H1 (cell line): ENCODE measurements at regions of chr11 and their contacts with region 1.

Region 1: DNA sequence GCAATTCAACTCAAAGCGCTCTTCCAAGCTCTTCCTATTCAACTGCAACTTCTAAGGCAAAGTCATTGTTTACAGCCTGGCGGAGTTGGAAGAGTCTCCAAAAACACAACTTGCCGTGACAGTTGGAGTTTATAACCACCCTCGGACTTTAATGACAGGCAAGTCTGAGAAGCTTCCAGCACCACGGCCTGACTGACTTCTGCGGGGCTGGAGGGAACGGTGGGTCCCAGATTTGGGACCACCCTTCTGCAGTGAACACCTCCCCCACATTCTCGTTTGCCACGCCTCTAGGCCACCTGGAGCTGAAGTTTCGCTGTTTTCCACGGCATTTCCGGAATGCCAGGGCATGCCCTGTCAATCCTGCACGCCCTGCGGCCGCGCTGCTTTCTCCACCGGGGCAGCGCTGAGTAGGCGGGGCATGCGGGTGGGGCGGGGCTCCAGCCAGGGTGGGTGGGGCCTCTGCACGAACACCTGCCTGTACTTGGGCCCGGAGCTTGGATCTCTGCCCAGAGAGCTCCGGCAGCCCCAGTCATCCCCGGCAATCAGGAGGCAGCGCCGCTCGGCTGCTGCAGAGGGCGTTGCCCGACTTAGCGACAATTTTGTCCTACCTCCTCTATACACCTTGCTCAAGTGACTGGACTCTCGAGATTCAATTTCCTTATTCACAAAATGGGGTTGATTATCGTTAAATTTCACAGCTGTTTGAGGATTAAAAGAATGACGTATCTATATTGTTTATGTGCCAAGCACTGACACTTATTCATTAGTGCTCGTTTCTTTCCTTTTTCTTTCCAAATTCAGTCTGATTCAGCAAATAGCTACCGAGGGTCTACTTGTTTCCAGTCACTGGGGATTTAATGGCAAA is 48.7 kb upstream of the BIRC3 start:
- DNase-seq: peak; percentile 88 to 89
- H3K4me3 ChIP-seq: peak overlapping the region; percentile 28 to 65 (median 56); a peak in 7 of 8 replicates
- H3K27ac ChIP-seq: no peak overlapping the region
- H3K4me1 ChIP-seq: peaks cover 3 to 18% (median 8%) of the 10 kb centered on the region in 4 experiments; a peak in 6 of 7 replicates
- H3K27me3 ChIP-seq: no peaks in the 10 kb centered on the region; a peak in 1 of 7 replicates
- CTCF ChIP-seq: peak; percentile 74 to 77 (median 74)
- EP300 ChIP-seq: no peak
- POLR2A ChIP-seq: no peak
- RAD21 ChIP-seq: peak; percentile 75 to 80

Region 2: GRCh38 chr11:102237096-102237735 is 31.3 kb before region 1 on chr11:
- CTCF ChIA-PET with region 1: interaction called, 11 read pairs
- POLR2A ChIA-PET with region 1: no interaction called
- DNase-seq: no peak
- H3K4me3 ChIP-seq: no peak overlapping the region
- H3K27ac ChIP-seq: no peak overlapping the region
- H3K4me1 ChIP-seq: peaks cover 0 to 4% (median 3%) of the 10 kb centered on the region in 4 experiments
- H3K27me3 ChIP-seq: no peaks in the 10 kb centered on the region
- CTCF ChIP-seq: no peak
- EP300 ChIP-seq: no peak
- POLR2A ChIP-seq: no peak
- RAD21 ChIP-seq: no peak

Region 3: DNA sequence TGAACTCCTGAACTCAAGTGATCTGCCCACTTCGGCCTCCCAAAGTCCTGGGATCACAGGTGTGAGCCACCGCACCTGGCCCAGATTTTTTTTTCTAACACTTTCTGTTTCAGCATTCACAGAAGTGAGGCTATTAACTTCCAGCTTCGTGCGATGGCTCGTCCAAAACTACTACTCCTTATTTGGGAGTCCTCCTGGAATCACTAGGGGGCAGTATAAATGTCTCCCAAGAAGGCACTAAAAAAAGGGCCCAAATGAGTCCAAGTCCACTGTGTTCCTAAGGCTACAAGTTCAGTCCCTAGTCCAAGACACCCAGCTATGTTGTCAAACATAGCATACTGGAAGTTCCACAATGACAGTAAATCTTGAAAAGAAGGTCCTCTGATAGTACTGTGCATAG is 14.5 kb before region 1 on chr11:
- CTCF ChIA-PET with region 1: interaction called, 36 read pairs
- POLR2A ChIA-PET with region 1: interaction called, 3 read pairs
- DNase-seq: no peak
- H3K4me3 ChIP-seq: no peak overlapping the region
- H3K27ac ChIP-seq: no peak overlapping the region
- H3K4me1 ChIP-seq: no peaks in the 10 kb centered on the region; a peak in 1 of 7 replicates
- H3K27me3 ChIP-seq: no peaks in the 10 kb centered on the region
- CTCF ChIP-seq: peak in 2 of 3 experiments; percentile 40 to 64; a peak in 2 of 4 replicates
- EP300 ChIP-seq: no peak
- POLR2A ChIP-seq: no peak
- RAD21 ChIP-seq: peak; percentile 44 to 47

Region 4: DNA sequence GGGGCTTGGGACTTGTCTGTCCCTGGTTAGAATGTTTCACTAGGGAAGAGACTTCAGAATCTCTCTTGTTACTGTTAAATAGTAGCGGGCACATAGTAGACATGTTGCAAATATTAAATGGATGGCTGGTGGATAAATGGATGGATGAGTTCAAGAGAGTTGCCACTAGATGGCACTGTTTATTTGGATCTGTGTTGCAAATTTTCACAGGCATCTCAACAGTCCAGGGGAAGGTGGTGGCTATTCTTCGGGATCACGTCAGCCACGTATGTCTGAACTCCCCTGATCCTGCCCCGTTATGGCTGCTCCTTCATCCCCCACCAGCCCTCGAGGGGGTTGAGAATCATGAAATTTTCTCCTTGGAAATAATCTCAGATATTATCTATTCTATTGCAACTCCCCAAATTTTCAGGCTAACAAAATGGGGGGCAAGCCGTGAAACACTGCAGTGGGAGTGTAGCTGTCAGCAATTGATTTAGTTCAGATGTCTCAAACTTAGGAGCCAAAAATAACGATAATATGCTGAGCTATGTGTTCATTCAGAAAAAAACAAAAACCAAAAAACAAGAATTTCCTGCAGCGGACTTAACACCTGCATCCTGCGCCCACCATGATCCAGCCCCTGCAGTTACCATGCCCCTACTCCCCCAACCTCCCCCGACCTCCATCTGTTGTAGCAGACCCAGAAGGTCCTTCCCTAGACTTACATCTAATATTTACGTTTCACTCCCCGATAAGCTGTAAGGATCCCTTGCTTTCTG is 19.6 kb after region 1 on chr11:
- CTCF ChIA-PET with region 1: interaction called, 20 read pairs
- POLR2A ChIA-PET with region 1: no interaction called
- DNase-seq: no peak
- H3K4me3 ChIP-seq: no peak overlapping the region
- H3K27ac ChIP-seq: no peak overlapping the region
- H3K4me1 ChIP-seq: peaks cover 0 to 5% (median 0%) of the 10 kb centered on the region in 4 experiments; a peak in 2 of 7 replicates
- H3K27me3 ChIP-seq: no peaks in the 10 kb centered on the region
- CTCF ChIP-seq: peak in 2 of 3 experiments; percentile 49 to 76; a peak in 3 of 4 replicates
- EP300 ChIP-seq: no peak
- POLR2A ChIP-seq: no peak
- RAD21 ChIP-seq: peak; percentile 75 to 79

Region 5: GRCh38 chr11:102323542-102324251 is 55.1 kb after region 1 on chr11:
- CTCF ChIA-PET with region 1: no interaction called
- POLR2A ChIA-PET with region 1: no interaction called
- DNase-seq: no peak
- H3K4me3 ChIP-seq: no peak overlapping the region
- H3K27ac ChIP-seq: no peak overlapping the region
- H3K4me1 ChIP-seq: no peaks in the 10 kb centered on the region
- H3K27me3 ChIP-seq: no peaks in the 10 kb centered on the region
- CTCF ChIP-seq: no peak
- EP300 ChIP-seq: no peak
- POLR2A ChIP-seq: no peak
- RAD21 ChIP-seq: no peak